ENCODE measurements at regions of chr2 and their contacts with region 1.

Region 1: GRCh38 chr2:150610671-150611279 is 123.3 kb upstream of the RND3 start:
- DNase-seq: no peak
- ATAC-seq: peak; percentile 56

Region 2: DNA sequence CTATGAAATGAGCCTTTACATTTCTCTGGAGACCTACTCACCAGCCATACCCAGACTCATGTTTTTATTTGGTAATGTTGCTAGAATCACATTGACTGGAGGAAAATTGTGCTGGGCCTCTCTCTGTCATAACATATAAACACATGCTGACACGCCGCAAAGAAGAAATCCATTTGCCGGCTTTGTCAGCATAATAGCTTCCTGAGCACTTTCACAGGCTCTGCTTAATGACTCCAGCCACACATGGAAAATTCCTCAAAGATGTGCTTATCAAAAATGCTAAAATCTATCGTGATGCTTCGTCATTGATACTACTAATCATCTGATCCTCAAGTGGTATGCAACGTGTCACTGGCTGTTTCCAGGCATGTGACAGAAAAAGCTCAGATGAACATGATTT is 186.4 kb before region 1 on chr2:
- intact Hi-C with region 1: loop called (anchors 5 kb)
- DNase-seq: no peak
- ATAC-seq: no peak

Region 3: GRCh38 chr2:150548527-150548926 is 62.2 kb before region 1 on chr2:
- intact Hi-C with region 1: no loop called
- DNase-seq: no peak
- ATAC-seq: no peak